CD4-positive, alpha-beta T cell (primary cell): ENCODE measurements at regions of chr12 and their contacts with region 1.

Region 1: GRCh38 chr12:122880668-122881067 is 15.3 kb downstream of the VPS37B start:
- DNase-seq: peak in 3 of 14 experiments; percentile 46 to 62 (median 54)
- ATAC-seq: peak; percentile 50
- H3K4me3 ChIP-seq: no peak overlapping the region
- H3K4me3 Mint-ChIP-seq: peak overlapping the region; percentile 50
- H3K27ac ChIP-seq: no peak overlapping the region
- H3K27ac Mint-ChIP-seq: peak overlapping the region; percentile 75
- H3K4me1 ChIP-seq: peaks cover 61% of the 10 kb centered on the region
- H3K4me1 Mint-ChIP-seq: peaks cover 94% of the 10 kb centered on the region
- H3K27me3 ChIP-seq: no peaks in the 10 kb centered on the region
- H3K27me3 Mint-ChIP-seq: no peaks in the 10 kb centered on the region
- CTCF ChIP-seq: no peak

Region 2: DNA sequence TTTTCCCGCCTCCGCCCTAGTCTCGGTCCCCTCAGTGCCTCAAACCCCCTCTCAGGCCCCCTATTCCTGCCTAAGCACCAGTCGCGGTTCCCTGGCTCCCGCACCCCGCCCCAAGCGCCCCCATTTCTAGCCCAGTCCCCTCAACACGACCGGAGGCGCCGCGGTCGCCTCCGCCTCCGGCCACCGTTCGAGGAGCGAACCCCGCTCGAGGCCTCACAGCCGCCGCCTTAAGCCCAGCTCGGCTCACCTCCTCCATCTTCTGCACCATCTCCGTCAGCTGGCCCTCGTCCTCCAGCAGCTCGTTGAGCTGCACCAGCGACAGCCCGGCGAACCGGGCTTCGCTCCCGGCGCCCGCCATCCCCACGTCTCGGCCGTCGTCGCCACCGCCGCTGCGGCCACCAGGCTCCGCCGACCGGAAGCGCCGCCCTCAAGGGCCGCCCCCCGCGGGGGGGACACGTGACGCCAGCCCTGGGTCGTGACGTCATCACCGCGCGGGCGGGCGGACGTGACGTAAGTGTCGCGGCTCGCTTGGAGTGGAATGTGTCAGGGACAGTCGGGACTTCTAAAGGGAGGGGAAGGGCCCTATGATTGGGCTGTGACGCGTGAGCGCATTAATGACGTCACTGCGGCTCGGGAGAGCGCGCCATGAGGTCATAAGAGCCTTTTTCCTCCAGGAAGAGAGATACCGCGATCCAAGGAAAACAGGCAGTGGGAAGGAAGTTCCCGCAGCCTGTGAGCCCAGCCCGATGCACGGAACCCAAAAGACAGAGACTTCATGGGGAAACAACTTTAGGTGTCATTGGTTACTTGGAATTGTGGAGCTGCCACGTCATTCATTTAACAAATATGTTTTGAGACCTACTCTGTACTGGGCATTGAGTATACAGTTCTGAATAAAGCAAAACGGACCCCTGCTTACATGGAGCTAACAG is 15.3 kb after region 1 on chr12 and contains the start of gene VPS37B:
- CTCF ChIA-PET with region 1: interaction called, 4 read pairs
- POLR2A ChIA-PET with region 1: interaction called, 35 read pairs
- intact Hi-C with region 1: loop called in 1 of 2 experiments (anchors 2 kb)
- DNase-seq: peak; percentile 68 to 95 (median 84)
- ATAC-seq: peak; percentile 66
- H3K4me3 ChIP-seq: peak within 1 kb of the TSS; percentile 64
- H3K4me3 Mint-ChIP-seq: peak within 1 kb of the TSS; percentile 87
- H3K27ac ChIP-seq: peak within 1 kb of the TSS; percentile 83 to 85
- H3K27ac Mint-ChIP-seq: peak within 1 kb of the TSS; percentile 98
- H3K4me1 ChIP-seq: peaks cover 68% of the 10 kb centered on the region
- H3K4me1 Mint-ChIP-seq: peaks cover 93% of the 10 kb centered on the region
- H3K27me3 ChIP-seq: no peaks in the 10 kb centered on the region
- H3K27me3 Mint-ChIP-seq: no peaks in the 10 kb centered on the region
- CTCF ChIP-seq: no peak
- total RNA-seq, gene VPS37B: 97.7 to 104 TPM

Region 3: DNA sequence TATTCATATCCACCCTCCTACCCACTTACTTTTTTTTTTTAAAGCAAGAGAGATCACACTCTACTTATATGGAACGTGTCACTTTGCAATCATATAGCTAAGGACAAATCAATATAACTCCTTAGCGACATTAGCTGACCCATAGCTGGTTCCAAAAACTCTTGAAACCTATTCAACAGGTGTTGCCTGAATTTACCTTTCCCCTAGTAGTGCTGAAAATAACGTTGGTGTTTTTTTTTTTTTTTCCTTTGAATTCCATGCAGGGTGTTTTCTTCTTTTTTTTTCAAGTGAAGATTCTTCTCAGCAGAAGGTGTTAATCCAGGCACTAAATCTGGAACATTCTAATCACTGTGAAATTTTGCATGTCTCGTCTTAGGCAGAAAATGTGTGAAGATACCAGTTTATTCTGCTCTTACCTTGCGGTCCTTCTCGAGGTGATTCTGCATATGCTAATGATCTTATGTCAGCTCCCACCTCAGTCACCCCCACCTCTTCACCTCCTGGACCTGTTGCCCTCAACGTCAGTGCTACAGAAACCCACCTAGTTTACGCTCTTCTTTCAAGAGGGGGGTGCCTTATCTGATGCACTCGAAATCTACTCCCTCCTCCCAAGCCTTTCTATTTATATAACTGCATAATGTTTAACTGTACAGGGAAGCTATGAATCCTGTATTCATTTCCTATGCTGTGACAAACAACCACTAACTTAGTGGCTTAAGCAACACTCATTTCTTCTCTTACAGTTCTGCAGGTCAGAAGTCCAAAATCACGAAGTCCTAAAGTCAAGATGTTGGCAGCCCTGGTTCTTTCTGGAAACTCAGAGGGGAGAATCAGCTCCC is 22.4 kb after region 1 on chr12:
- CTCF ChIA-PET with region 1: no interaction called
- POLR2A ChIA-PET with region 1: interaction called, 35 read pairs
- intact Hi-C with region 1: loop called in 1 of 2 experiments (anchors 2 kb)
- DNase-seq: no peak
- ATAC-seq: no peak
- H3K4me3 ChIP-seq: no peak overlapping the region
- H3K4me3 Mint-ChIP-seq: peak overlapping the region; percentile 66
- H3K27ac ChIP-seq: no peak overlapping the region
- H3K27ac Mint-ChIP-seq: no peak overlapping the region
- H3K4me1 ChIP-seq: peaks cover 34% of the 10 kb centered on the region
- H3K4me1 Mint-ChIP-seq: peaks cover 42% of the 10 kb centered on the region
- H3K27me3 ChIP-seq: no peaks in the 10 kb centered on the region
- H3K27me3 Mint-ChIP-seq: no peaks in the 10 kb centered on the region
- CTCF ChIP-seq: no peak

Region 4: GRCh38 chr12:122921917-122922316 is 41.2 kb after region 1 on chr12:
- CTCF ChIA-PET with region 1: no interaction called
- POLR2A ChIA-PET with region 1: no interaction called
- intact Hi-C with region 1: no loop called
- DNase-seq: no peak
- ATAC-seq: no peak
- H3K4me3 ChIP-seq: no peak overlapping the region
- H3K4me3 Mint-ChIP-seq: no peak overlapping the region
- H3K27ac ChIP-seq: no peak overlapping the region
- H3K27ac Mint-ChIP-seq: no peak overlapping the region
- H3K4me1 ChIP-seq: no peaks in the 10 kb centered on the region
- H3K4me1 Mint-ChIP-seq: no peaks in the 10 kb centered on the region
- H3K27me3 ChIP-seq: no peaks in the 10 kb centered on the region
- H3K27me3 Mint-ChIP-seq: no peaks in the 10 kb centered on the region
- CTCF ChIP-seq: no peak